ENCODE measurements at regions of chr9 and their contacts with region 1.

Region 1: DNA sequence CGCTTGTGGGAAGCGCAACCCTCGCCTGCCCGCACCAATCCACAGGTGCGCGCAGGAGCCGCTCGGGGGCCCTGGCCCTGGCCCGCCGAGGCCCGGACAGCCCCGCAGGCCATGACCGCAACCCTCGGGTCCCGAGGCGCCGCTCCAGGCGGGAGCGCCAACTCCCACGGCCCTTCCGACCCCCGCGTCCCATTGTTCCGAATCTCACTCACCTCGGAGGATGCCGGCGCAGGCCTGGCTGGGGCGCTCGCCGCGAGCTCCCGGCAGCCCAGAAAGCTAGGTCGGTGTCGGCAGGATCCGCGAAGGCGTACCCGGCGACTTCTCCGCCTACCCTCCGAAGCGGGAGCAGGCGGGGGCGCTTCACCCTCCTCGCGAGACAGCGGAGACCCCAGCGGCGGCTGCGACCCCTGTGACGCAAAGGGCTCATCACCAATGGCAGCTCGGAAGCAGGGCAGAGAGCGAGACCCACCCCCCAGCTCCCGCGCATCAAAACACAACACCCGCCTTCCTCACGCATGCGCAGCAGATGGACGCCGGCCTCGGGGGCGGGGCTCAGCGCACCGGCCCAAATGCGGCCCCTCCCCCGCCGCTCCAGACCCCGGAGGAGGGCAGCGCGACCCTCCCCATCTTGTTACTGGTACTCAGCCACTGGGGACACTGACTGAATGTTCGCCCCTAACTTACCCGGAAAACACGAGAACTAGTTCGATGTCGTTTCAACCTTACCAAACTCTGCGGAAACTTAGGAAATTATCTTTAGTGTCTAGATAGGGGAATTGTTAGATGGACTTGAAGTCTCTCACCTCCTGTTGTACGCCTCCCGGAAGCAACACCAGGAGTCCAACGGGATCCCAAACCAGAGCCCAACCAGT is 1.3 kb upstream of the SMIM27 start:
- DNase-seq: peak; percentile 94
- H3K4me3 Mint-ChIP-seq: peak overlapping the region; percentile 91
- H3K27ac Mint-ChIP-seq: peak overlapping the region; percentile 100
- H3K4me1 Mint-ChIP-seq: peaks cover 44% of the 10 kb centered on the region
- H3K27me3 Mint-ChIP-seq: no peaks in the 10 kb centered on the region

Region 2: DNA sequence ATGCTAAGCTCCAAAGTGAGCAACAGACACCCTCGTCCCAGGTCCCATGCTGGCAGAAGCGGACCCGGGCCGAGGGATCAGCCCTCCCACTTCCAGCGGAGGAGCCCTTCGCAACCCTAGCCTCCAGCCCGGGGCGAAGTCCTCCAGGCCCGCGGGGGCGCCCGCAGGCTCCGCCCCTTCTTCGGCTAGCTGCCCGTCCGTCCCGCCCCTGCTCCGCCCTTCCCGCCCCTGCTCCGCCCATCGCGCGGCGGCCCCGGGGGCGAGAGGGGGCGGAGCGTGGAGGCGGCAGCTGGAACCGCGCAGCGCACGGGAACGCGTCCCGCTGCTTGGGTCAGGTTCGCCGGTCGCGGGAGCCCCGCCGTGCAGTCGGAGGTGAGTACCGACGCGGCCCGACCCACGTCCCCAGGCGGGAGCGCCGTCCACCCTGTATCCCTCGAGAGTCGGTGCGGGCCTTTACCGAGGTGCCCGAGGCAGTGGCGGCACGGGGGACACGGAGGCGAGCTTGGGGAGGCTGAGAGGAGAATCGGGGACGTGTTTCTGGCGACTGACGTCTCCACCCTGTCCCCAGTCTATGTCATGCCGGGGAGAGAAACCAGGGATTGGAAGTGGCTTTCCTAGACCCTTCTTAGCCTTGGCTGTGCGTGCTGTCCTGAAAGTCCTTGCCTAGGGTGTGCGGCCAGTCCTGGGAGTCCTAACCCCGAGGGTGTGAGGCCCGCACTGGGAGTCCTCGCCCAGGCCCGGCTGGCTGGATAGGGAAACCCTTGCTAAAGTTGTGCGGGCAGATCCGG is 166.2 kb before region 1 on chr9 and contains the start of gene ACO1:
- CTCF ChIA-PET with region 1: interaction called, 41 read pairs
- POLR2A ChIA-PET with region 1: interaction called, 30 read pairs
- DNase-seq: peak; percentile 87
- H3K4me3 Mint-ChIP-seq: peak within 1 kb of the TSS; percentile 75
- H3K27ac Mint-ChIP-seq: no peak within 1 kb of the TSS
- H3K4me1 Mint-ChIP-seq: peaks cover 8% of the 10 kb centered on the region
- H3K27me3 Mint-ChIP-seq: peaks cover 35% of the 10 kb centered on the region
- total RNA-seq, gene ACO1: 6.4 to 6.6 TPM

Region 3: DNA sequence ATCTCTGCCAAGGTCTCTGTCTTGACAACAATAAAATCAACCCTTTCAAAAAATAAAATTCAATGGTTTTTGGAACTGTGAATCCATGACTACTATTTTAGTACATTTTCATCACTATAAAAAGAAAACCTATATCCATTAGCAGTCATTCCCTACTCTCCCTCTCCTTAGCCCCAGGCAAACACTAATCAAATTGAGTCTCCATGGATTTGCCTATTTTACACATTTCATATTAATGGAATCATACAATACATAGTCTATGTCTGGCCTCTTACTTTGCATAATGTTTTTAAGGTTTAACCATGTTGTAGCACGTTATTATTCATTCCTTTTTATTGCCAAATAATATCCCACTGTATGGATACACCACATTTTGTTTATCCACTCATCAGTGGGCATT is 48.9 kb before region 1 on chr9:
- CTCF ChIA-PET with region 1: no interaction called
- POLR2A ChIA-PET with region 1: no interaction called
- DNase-seq: no peak
- H3K4me3 Mint-ChIP-seq: no peak overlapping the region
- H3K27ac Mint-ChIP-seq: no peak overlapping the region
- H3K4me1 Mint-ChIP-seq: no peaks in the 10 kb centered on the region
- H3K27me3 Mint-ChIP-seq: no peaks in the 10 kb centered on the region

Region 4: GRCh38 chr9:32526041-32526706 is 24.6 kb before region 1 on chr9 and contains the start of gene RIGI:
- CTCF ChIA-PET with region 1: interaction called, 41 read pairs
- POLR2A ChIA-PET with region 1: interaction called, 57 read pairs
- DNase-seq: peak; percentile 83
- H3K4me3 Mint-ChIP-seq: peak within 1 kb of the TSS; percentile 96
- H3K27ac Mint-ChIP-seq: peak within 1 kb of the TSS; percentile 88
- H3K4me1 Mint-ChIP-seq: peaks cover 60% of the 10 kb centered on the region
- H3K27me3 Mint-ChIP-seq: no peaks in the 10 kb centered on the region
- total RNA-seq, gene RIGI: 32.4 to 33.7 TPM

Region 5: DNA sequence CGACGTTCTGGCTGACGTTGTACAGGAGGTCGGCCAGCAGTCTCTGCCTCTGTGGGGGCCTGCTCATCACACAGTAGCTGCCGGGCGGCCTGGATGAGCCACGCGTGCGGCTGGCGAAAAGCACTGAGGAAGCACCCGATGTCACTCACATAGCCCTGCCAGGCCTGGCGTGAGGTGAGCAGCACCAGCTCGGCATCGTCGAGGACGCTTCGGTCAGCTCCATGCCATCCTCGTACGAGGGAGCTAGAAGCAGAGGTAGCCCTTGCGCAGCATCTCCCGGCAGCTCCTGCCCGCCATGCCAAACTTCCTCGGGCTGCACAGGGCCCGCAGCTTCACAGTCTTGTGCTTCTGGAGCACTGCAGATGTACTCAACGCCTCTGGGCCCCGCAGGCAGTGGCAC is 16.0 kb after region 1 on chr9:
- CTCF ChIA-PET with region 1: interaction called, 56 read pairs
- POLR2A ChIA-PET with region 1: interaction called, 36 read pairs
- DNase-seq: no peak
- H3K4me3 Mint-ChIP-seq: no peak overlapping the region
- H3K27ac Mint-ChIP-seq: no peak overlapping the region
- H3K4me1 Mint-ChIP-seq: peaks cover 20% of the 10 kb centered on the region
- H3K27me3 Mint-ChIP-seq: no peaks in the 10 kb centered on the region

Region 6: DNA sequence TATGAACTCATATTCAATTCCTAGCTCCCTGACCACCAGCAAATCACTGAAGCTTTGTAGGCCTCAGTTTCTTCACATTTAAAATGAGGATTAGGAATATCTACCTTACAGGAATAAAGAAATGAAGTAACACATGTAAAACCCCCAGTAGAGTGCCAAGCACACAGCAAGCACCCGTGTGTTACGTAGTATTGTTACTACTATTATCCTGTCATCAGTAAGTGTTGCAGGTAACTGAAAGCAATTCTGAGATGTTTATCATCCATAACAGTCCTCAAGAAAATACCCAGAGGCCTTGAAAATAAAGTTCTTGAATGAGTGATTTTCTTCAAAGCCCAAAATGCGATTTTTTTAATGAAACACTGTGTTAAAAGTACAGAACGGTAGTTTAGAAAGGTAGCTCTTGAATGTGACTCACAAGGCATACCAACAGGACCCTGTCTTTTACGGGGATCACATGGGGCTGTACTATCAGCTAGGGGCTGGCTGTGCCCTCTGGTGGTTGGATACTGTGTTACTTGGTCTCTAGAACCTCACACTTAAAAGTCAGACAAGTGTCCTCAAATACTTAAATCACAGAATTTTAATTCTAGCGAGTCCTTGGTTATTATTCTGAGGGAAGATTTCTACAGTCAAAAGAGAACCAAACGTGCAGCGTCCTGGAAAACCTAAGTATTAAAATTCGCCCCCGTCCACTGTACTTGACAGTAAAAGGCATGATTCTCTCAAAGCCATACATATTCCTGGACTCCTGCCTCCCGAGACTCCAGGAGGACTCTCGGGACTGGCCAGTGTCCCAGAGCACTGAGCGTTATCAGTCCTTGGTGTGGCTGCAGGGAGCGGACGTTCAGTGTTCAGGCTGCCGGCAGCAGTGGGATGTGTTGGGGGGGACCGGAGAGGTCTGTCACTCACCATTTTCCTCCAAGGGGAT is 21.4 kb after region 1 on chr9:
- CTCF ChIA-PET with region 1: interaction called, 56 read pairs
- POLR2A ChIA-PET with region 1: interaction called, 36 read pairs
- DNase-seq: peak; percentile 81
- H3K4me3 Mint-ChIP-seq: peak overlapping the region; percentile 97
- H3K27ac Mint-ChIP-seq: peak overlapping the region; percentile 96
- H3K4me1 Mint-ChIP-seq: peaks cover 28% of the 10 kb centered on the region
- H3K27me3 Mint-ChIP-seq: peaks cover 1% of the 10 kb centered on the region